ENCODE measurements at regions of chr13 and their contacts with region 1.

Region 1: GRCh38 chr13:80168089-80168850 is 172.7 kb downstream of the SPRY2 start:
- DNase-seq: peak; percentile 89 to 96 (median 96)
- H3K4me3 ChIP-seq: peak overlapping the region in 1 of 3 experiments; percentile 50
- H3K4me3 Mint-ChIP-seq: peak overlapping the region; percentile 1 to 70
- H3K27ac ChIP-seq: peak overlapping the region; percentile 92 to 95
- H3K27ac Mint-ChIP-seq: peak overlapping the region; percentile 90 to 99 (median 95)
- H3K4me1 ChIP-seq: peaks cover 43 to 48% of the 10 kb centered on the region in 2 donors
- H3K4me1 Mint-ChIP-seq: peaks cover 42% of the 10 kb centered on the region
- H3K27me3 ChIP-seq: peaks cover 0 to 5% of the 10 kb centered on the region in 2 donors
- H3K27me3 Mint-ChIP-seq: peaks cover 7 to 21% (median 8%) of the 10 kb centered on the region in 3 donors
- CTCF ChIP-seq: no peak

Region 2: GRCh38 chr13:79987323-79987722 is 180.9 kb before region 1 on chr13:
- intact Hi-C with region 1: no loop called
- DNase-seq: no peak
- H3K4me3 ChIP-seq: no peak overlapping the region
- H3K4me3 Mint-ChIP-seq: no peak overlapping the region
- H3K27ac ChIP-seq: no peak overlapping the region
- H3K27ac Mint-ChIP-seq: no peak overlapping the region
- H3K4me1 ChIP-seq: no peaks in the 10 kb centered on the region
- H3K4me1 Mint-ChIP-seq: no peaks in the 10 kb centered on the region
- H3K27me3 ChIP-seq: no peaks in the 10 kb centered on the region
- H3K27me3 Mint-ChIP-seq: peaks cover 0 to 1% (median 0%) of the 10 kb centered on the region in 3 donors
- CTCF ChIP-seq: no peak

Region 3: DNA sequence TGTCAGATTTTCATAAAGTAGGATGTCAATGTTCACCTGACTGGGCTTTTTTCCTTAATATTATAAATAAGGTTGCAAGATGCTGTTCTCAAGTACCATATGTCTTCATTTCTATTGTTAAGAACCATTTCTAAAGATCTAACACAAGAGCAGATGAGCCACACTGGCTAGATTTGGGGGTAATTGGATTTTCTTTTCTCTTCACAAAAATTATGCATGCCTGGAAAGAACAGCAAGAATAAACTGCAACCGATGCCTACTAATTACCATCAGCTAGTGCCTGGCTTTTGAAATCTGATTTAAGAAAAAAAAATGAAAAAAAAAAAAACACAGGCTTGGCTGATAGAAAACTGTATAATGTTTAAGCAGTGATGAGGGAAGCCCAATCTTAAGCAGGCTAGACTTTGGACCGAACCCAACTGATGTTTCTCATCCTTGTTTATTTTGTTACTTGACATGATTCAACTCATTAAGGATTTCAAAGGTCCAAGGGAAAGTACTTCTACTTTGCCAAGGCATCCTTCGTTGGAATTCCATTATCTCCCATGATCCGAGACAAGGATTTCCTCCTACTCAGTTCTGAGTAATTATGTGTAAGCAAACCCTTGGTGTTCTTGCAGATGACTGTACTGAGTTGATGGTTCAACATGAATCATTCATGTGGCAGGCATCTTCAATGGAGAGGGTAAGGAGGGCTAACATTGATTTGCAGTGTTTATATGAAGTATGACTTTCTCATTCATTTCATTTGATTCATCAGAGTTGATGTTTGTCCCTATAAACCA is 127.9 kb before region 1 on chr13:
- intact Hi-C with region 1: loop called in 1 of 2 experiments (anchors 5 kb)
- DNase-seq: peak; percentile 49 to 84 (median 68)
- H3K4me3 ChIP-seq: no peak overlapping the region
- H3K4me3 Mint-ChIP-seq: peak overlapping the region in 1 of 2 donors; percentile 22
- H3K27ac ChIP-seq: peak overlapping the region in 1 of 2 donors; percentile 42
- H3K27ac Mint-ChIP-seq: peak overlapping the region in 6 of 7 donors; percentile 19 to 92 (median 86)
- H3K4me1 ChIP-seq: peaks cover 53 to 56% of the 10 kb centered on the region in 2 donors
- H3K4me1 Mint-ChIP-seq: peaks cover 68% of the 10 kb centered on the region
- H3K27me3 ChIP-seq: no peaks in the 10 kb centered on the region
- H3K27me3 Mint-ChIP-seq: no peaks in the 10 kb centered on the region
- CTCF ChIP-seq: no peak

Region 4: DNA sequence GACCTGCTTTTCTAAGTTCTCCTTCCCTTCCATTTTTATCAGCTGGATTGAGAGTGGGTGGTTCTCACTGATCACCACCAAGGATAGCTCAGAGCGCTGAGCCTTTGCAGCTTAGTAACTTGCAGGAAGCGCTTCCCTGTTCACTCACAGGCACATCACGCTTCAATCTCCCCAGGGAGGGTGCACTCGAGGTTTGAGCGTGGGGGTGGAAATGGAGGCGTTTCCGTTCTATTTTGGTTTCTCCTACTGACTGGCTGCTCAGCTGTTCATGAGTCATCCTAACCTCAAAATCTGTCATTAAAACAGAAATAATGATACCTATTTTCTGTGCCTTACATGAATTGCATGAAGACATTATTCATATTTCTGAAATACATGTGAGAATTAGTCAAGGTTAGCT is 119.5 kb before region 1 on chr13:
- intact Hi-C with region 1: loop called (anchors 2 to 5 kb)
- DNase-seq: peak; percentile 94 to 98 (median 95)
- H3K4me3 ChIP-seq: peak overlapping the region in 1 of 3 experiments; percentile 19
- H3K4me3 Mint-ChIP-seq: peak overlapping the region in 1 of 2 donors; percentile 48
- H3K27ac ChIP-seq: peak overlapping the region in 1 of 2 donors; percentile 42
- H3K27ac Mint-ChIP-seq: peak overlapping the region; percentile 75 to 90 (median 82)
- H3K4me1 ChIP-seq: peaks cover 14 to 27% of the 10 kb centered on the region in 2 donors
- H3K4me1 Mint-ChIP-seq: peaks cover 31% of the 10 kb centered on the region
- H3K27me3 ChIP-seq: no peaks in the 10 kb centered on the region
- H3K27me3 Mint-ChIP-seq: peaks cover 0 to 2% (median 0%) of the 10 kb centered on the region in 3 donors
- CTCF ChIP-seq: no peak

Region 5: GRCh38 chr13:80224468-80224867 is 56.2 kb after region 1 on chr13:
- intact Hi-C with region 1: loop called in 1 of 2 experiments (anchors 10 kb)
- DNase-seq: peak in 1 of 3 donors; percentile 13
- H3K4me3 ChIP-seq: no peak overlapping the region
- H3K4me3 Mint-ChIP-seq: no peak overlapping the region
- H3K27ac ChIP-seq: no peak overlapping the region
- H3K27ac Mint-ChIP-seq: no peak overlapping the region
- H3K4me1 ChIP-seq: no peaks in the 10 kb centered on the region
- H3K4me1 Mint-ChIP-seq: peaks cover 3% of the 10 kb centered on the region
- H3K27me3 ChIP-seq: no peaks in the 10 kb centered on the region
- H3K27me3 Mint-ChIP-seq: no peaks in the 10 kb centered on the region
- CTCF ChIP-seq: no peak

Region 6: DNA sequence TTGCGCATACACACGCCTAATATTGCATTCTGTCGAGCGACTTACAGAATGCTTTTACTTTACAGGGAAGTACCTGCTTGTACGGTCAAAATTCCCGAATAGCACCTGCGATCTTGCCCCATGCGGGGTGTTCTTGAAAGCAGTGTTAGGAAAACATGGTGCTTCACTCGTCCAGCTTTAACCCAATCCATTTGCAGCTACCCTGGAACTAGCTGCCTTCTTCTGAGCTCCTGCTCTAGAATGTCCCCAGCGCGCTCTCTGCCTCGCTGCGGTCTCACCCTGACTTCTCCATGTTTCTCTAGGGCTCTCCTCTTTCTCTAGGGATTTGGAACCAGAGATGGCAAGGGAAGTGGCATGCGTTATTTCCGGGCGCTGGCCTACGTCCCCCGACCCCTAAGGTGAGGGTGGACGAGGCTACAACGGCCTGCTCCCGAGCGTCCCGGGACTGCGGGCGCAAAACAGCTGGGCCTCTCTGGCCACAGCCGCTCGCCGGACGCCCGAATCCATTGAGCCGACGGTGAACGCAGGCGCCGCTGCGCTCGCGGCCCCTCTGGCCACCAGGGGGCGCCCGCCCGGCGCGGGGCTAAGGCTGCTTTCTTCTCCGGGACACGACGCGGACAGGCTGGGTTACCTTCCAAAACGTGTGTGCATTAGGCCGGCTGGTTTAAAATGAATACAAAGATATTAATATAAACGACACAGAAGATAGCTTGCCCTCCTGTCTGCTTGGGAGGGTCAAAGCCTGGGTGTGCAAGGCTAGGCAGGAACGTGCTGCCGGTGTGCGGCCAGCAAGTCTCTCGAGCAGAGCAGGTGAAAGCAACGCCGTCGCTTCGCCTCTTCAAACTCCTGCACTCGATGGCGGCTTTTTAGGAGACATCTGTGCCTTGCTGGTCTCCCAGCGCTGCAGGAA is 174.5 kb after region 1 on chr13:
- intact Hi-C with region 1: loop called in 1 of 2 experiments (anchors 10 kb)
- DNase-seq: peak; percentile 57 to 67 (median 64)
- H3K4me3 ChIP-seq: peak overlapping the region; percentile 42 to 89 (median 52)
- H3K4me3 Mint-ChIP-seq: peak overlapping the region in 1 of 2 donors; percentile 83
- H3K27ac ChIP-seq: no peak overlapping the region
- H3K27ac Mint-ChIP-seq: peak overlapping the region in 3 of 7 donors; percentile 32 to 82 (median 61)
- H3K4me1 ChIP-seq: peaks cover 38 to 52% of the 10 kb centered on the region in 2 donors
- H3K4me1 Mint-ChIP-seq: peaks cover 26% of the 10 kb centered on the region
- H3K27me3 ChIP-seq: peaks cover 8 to 41% of the 10 kb centered on the region in 2 donors
- H3K27me3 Mint-ChIP-seq: peaks cover 16 to 28% (median 28%) of the 10 kb centered on the region in 3 donors
- CTCF ChIP-seq: peak; percentile 99

Region 7: DNA sequence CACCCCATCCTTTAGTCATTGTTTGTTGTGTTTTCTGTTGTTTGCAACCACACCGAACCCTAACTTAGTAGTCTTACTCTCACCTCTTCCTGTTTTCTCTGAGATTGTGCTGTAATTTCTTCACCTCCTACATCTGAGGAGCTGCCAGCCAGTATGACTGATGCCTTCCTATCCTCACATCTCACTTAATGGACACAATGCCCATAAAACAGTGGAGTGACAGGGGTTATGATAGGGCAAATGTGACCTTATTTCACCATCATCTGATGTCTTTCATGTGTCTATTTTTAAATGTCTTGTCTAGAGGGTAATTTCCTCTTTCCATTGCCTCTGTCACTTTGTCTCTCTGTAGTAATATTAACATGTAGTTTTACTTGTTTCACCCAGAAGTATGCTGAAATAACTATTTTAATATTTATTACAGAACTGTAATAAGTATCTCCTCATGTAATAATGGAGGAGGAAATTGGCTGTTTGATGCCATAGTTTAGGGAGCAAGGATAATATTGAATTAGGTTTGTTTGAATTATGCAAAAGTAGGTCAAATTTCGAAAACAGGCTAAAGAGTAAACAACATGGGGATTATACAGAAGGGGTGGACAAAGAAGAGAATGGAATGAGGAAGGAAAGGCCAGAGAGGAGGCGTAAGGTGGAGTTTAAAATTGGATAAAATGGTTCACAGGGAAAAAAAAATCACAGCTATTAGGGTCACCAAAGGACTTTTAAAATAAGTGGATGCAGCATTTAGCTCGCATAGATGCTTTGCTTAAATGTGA is 276.2 kb after region 1 on chr13:
- intact Hi-C with region 1: loop called in 1 of 2 experiments (anchors 10 kb)
- DNase-seq: peak; percentile 85 to 89 (median 87)
- H3K4me3 ChIP-seq: peak overlapping the region in 1 of 3 experiments; percentile 29
- H3K4me3 Mint-ChIP-seq: peak overlapping the region in 1 of 2 donors; percentile 83
- H3K27ac ChIP-seq: peak overlapping the region in 1 of 2 donors; percentile 39
- H3K27ac Mint-ChIP-seq: peak overlapping the region; percentile 51 to 92 (median 87)
- H3K4me1 ChIP-seq: peaks cover 26 to 39% of the 10 kb centered on the region in 2 donors
- H3K4me1 Mint-ChIP-seq: peaks cover 47% of the 10 kb centered on the region
- H3K27me3 ChIP-seq: peaks cover 0 to 3% of the 10 kb centered on the region in 2 donors
- H3K27me3 Mint-ChIP-seq: peaks cover 4 to 19% (median 10%) of the 10 kb centered on the region in 3 donors
- CTCF ChIP-seq: no peak

Measured in CD14-positive monocyte (primary cell).